ENCODE measurements at regions of chr2 and their contacts with region 1.

Region 1: GRCh38 chr2:127591221-127591923 is 54.6 kb upstream of the GPR17 start:
- DNase-seq: no peak
- H3K4me3 ChIP-seq: no peak overlapping the region
- H3K27me3 ChIP-seq: no peaks in the 10 kb centered on the region; the same call in 1 of the 2 replicates
- CTCF ChIP-seq: peak; percentile 100

Region 2: DNA sequence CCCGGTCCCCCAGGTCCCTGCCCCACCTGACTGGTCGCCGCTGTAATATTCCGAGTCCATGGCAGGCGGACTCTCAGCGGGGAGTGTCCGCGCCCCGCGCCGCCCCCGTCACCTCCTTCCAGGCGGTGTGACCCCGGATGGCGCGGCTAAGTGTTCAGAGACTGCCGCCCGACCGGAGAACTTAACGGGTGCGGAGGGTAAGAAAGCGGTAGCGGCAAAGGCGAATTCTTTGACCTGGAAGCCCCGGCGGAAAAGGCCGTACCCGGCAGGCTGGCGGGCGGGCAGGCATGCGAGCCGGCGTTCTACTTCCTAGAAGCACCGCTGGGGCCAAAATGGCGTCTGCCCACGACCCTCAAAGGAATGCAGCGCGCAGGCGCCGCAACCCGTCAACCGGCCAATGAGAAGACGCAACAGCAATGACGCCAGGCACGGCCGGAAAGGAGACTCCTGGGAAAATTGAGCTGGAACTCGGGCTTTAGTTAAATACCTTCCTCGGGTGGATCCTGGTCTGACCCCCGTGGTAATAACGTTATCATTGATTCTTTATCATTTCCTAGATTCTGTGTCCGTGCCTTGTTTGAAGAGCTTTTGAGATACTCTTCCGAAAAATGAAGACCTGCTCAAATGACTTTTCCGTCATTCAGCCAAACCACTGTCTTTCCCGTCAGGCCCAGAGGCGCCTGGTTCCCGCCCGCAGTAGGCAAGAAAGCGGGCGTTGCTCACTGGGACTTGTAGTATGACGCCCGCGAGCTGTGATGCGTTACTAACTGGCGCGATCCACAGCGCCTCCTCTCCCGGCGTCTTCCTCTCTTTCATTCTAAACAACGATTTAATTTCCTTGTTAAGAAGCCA is 65.0 kb before region 1 on chr2 and contains the start of gene IWS1:
- CTCF ChIA-PET with region 1: no interaction called
- POLR2A ChIA-PET with region 1: no interaction called
- DNase-seq: peak; percentile 78
- H3K4me3 ChIP-seq: peak within 1 kb of the TSS; percentile 93
- H3K27me3 ChIP-seq: no peaks in the 10 kb centered on the region
- CTCF ChIP-seq: peak; percentile 33; the same call in 1 of the 2 replicates
- polyA plus RNA-seq, gene IWS1: 23.9 and 33.8 TPM in 2 replicates

Region 3: DNA sequence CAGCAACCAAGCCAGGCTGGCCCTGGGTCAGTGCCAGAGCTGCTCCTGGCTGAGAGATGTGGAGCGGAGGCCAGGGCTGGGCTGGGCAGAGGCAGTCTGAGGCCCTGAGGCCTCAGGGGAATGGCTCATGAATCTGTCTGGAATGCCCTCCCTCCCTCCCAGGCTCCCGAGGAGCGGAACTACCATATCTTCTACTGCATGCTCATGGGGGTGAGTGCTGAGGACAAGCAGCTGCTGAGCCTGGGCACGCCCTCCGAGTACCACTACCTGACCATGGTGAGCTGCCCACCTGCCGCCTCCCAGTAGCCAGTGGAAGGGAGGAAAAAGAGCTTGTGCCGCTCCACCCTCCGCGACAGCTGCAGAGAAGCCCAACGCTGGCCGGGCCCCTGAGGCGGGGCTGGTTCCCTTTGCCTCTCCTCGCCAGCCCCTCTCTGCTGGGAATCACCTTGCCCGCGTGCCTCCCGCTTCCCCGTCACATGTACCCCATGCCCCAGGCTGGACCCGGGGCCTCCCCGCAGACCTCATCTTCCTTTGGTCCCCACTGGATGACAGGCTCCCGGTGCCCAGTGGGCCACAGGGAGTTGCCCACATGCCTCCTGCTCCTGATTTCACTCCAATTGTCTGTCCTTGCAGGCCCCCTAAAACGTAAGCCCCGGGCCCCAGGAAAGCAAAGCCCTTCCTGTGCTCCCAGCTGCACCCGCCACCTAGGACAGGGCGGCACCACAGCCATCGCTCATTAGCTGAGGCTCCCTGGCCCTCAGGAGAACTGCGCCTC is 14.8 kb before region 1 on chr2:
- CTCF ChIA-PET with region 1: interaction called, 20 read pairs
- POLR2A ChIA-PET with region 1: no interaction called
- DNase-seq: peak; percentile 56
- H3K4me3 ChIP-seq: no peak overlapping the region
- H3K27me3 ChIP-seq: peaks cover 4% of the 10 kb centered on the region
- CTCF ChIP-seq: no peak

Region 4: DNA sequence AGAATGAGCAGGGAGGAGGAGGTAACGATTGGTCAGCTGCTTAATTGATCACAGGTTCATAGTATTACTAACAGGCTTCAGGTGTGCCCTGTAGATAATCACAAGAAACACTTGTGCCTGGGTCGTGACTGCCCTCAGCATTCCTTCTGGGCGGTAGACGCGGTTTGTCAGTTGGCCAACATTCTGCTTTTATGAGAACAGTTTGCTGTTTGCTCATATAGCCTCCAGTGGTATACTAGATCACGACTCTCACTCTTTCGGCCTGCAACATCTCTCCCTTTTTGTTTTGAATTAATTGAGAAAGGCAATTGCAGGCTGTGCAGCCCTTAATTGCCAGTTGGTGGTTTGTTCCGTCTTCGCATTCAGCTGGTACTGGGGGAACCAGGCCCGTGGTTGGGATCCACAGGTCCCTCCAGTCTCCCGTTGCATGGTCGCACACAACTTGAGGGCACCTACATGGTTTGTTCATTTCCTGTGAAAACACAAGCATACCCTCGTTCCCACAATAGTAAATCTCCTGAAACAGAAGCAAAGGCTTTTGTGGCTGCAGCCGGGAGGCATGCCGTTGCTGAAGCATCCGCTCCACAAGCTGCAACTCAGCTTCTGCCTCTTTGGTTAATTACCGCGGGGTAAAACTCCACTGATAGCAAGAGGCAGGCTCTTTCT is 24.3 kb after region 1 on chr2:
- CTCF ChIA-PET with region 1: interaction called, 37 read pairs
- POLR2A ChIA-PET with region 1: no interaction called
- DNase-seq: peak; percentile 73
- H3K4me3 ChIP-seq: no peak overlapping the region
- H3K27me3 ChIP-seq: no peaks in the 10 kb centered on the region
- CTCF ChIP-seq: no peak

Region 5: DNA sequence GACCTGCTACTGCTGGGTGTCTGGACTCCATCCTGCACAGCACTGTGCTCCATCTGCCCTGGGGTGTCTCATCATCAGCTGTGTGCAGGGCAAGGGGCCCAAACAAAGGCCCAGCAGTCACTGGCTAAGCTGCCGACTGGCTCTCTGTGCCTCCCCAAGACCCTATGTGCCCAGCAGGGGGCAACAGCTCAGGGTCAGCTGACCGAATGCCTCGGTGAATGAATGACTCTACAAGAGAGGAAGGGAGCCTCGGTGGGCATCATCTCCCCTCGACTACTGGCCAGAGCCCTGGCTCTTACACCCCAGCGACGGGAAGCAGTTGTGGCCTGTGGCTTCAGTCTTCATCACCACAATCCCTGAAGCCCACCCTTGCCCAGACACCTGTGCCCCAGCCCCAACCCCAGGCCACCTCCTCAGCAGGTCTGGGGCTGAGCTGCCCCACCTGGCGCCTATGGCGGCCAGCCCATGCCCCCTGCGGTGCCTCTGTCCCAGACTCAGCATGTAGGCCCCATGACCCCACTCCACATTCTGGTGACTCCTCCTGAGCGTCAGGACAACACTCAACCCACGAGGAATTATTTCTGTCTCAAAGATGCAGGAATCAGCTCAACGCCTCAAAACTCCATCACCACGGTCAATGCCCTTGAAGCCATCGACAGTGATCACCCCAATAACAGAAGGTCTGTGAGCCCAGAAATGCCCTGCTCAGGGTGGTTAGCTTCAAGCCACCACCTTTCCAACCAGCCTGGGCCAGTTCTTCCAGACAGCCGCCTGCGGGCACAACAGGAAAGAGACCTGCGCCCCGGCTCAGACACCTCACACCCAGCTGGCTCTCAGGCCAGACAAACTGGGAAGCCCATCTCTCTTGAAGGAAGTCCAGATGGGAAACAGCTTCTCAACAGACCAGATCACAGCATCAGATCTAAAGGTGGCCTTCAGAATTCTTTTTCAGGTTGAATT is 53.0 kb after region 1 on chr2:
- CTCF ChIA-PET with region 1: interaction called, 89 read pairs
- POLR2A ChIA-PET with region 1: no interaction called
- DNase-seq: no peak
- H3K4me3 ChIP-seq: no peak overlapping the region
- H3K27me3 ChIP-seq: no peaks in the 10 kb centered on the region
- CTCF ChIP-seq: no peak

Region 6: DNA sequence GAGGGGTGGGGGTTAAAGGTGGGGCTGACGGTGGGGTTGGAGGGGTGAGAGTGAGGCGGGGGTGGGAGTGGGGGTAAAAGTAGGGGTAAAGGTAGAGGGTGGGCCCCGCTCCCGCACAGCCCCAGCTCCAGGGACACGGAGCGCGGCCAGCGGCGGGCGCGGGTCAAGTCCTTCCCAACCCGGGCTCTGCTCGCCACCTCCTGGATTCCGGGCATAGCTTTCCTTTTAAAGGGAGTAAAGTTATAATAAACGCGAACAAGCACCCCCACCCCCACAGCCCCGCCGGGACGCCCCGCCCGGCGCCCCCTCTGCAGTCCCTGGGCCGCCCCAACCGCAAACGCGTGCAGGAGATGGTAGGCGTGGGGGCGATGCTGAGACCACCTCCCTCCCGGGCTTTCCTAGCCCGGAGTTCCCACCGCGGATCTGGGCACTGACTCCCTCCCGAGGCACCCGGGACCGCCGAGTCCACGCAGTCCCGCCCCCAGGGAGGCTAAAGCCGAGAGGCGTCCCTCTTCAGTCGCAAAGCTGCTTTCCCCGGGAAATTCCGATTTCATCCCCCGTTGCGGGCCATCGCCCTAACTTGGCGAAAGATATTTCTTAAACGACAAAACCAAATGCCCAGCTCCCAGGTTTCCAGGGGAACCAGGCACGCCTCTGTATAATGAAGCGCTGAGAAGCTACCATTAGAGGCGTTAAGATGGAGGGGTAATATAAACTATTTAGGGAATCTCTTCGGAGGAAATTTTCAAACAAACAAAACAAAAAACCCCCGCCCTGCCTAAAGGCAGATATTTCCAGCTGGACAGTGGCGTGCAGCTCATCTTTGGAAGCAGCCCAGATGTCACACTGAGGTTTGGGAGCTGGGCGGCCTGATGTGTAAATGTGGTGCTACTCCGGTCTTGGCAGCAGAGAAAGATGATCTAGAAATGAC is 84.2 kb after region 1 on chr2 and contains the start of gene LIMS2:
- CTCF ChIA-PET with region 1: interaction called, 24 read pairs
- POLR2A ChIA-PET with region 1: no interaction called
- DNase-seq: peak; percentile 37
- H3K4me3 ChIP-seq: peak within 1 kb of the TSS; percentile 60
- H3K27me3 ChIP-seq: peaks cover 12% of the 10 kb centered on the region
- CTCF ChIP-seq: peak; percentile 26; the same call in 1 of the 2 replicates
- polyA plus RNA-seq, gene LIMS2: 33.2 and 46.1 TPM in 2 replicates

Region 7: DNA sequence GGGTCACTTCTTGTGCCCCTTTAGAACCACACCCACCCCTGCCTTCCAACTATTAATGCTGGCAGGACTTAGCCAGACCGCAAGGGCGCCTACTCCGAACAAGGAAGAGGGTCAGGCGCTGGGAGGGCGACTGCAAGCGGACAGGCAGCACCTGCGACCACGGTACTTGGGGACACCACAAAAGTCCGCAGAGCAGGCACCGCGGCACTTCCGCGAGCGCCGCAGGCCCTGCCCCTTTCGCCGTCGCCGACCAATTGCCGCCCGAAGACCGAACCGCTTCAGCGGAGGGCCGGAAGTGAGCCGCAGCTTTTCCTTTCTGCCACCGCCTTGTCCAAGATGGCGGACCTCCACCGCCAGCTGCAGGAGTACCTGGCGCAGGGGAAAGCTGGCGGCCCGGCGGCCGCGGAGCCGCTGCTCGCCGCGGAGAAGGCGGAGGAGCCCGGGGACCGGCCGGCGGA is 109.8 kb after region 1 on chr2 and contains the start of gene SFT2D3:
- CTCF ChIA-PET with region 1: interaction called, 23 read pairs
- POLR2A ChIA-PET with region 1: no interaction called
- DNase-seq: no peak
- H3K4me3 ChIP-seq: peak within 1 kb of the TSS; percentile 56
- H3K27me3 ChIP-seq: no peaks in the 10 kb centered on the region
- CTCF ChIP-seq: no peak
- polyA plus RNA-seq, gene SFT2D3: 3.5 and 4.4 TPM in 2 replicates